ENCODE measurements at regions of chr1 and their contacts with region 1.

Region 1: DNA sequence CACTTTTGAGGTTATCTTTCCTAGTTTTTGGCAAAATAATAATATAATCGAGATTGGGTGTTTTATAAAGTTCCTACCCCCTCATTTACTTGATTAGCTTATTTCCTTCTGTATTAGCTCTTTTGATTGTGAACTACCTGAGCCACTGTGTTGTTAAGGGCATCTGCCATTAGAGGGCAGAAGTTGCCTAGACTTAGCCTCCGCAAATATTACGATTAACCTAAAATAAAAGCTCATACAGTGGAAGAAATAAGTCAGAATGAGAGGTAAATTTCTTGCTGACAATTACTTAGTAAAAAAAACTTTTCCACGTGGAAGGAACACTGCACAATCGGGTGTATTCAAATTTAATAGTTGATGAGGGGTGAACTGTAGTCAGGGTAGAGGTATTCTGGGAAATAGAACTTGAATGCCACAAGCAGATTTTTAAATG is 2.3 kb downstream of the H3-3A start:
- DNase-seq: peak; percentile 62
- H3K27ac ChIP-seq: no peak overlapping the region
- CTCF ChIP-seq: peak; percentile 76

Region 2: DNA sequence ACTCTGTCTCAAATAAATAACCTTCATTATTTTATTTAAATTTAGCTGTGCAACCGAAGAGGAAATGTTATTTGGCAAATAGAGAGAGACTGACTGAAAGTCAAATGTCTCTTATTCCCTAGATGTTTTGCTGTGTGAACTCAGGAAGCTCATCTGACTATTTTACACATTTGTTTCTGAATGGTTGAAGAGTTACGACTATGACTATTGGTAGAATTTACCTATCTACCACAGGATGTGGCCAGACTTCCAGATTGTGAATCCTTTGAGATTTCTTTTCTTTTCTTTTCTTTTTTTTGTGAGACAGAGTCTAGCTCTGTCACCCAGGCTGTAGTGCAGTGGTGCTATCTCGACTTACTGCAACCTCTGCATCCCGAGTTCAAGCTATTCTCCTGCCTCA is 60.4 kb before region 1 on chr1:
- CTCF ChIA-PET with region 1: interaction called, 18 read pairs
- POLR2A ChIA-PET with region 1: interaction called, 3 read pairs
- DNase-seq: no peak
- H3K27ac ChIP-seq: no peak overlapping the region
- CTCF ChIP-seq: no peak

Region 3: GRCh38 chr1:226083302-226084101 is 18.7 kb after region 1 on chr1:
- CTCF ChIA-PET with region 1: interaction called, 19 read pairs
- POLR2A ChIA-PET with region 1: interaction called, 4 read pairs
- DNase-seq: peak; percentile 98
- H3K27ac ChIP-seq: peak overlapping the region; percentile 84
- CTCF ChIP-seq: no peak

Region 4: DNA sequence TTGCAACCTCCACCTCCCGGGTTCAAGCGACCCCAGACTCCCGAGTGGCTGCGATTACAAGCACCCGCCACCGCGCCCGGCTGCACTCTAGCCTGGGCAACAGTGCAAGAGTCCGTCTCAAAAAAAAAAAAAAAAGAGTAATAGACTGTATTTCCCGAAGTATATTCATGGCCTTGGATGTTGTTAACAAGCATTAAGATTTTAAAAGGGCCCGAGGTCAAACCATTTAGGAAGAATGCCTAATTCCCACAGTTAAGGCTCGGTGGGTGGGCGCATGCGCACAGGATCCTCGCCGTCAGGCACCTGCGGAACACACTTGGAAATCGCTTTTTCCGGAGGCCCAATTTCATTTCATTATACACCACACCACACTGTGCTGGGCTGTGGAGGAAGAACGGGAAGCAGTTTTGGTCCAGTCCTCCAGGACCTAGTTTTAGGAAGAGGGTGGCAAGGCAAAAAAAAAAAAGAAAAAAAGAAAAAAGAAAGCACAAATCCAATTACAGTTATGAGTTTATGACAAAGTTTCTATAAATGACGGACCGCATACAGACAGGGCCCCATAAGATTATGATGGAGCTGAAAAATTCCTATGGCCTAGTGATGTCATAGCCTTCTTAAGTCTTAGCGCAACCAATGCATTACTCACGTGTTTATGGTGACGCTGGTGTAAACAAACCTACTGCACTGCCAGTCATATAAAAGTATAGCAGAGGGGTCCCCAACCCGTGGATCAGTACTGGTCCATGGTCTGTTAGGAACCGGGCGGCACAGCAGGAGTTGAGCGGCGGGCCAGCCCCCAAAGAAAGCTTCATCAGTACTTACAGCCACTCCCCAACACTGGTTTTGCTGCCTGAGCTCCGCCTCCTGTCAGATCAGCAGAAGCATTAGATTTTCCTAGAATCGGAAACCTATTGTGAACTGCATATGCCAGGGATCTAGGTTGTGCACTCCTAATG is 35.9 kb after region 1 on chr1:
- CTCF ChIA-PET with region 1: interaction called, 11 read pairs
- POLR2A ChIA-PET with region 1: no interaction called
- DNase-seq: no peak
- H3K27ac ChIP-seq: no peak overlapping the region
- CTCF ChIP-seq: no peak

Region 5: GRCh38 chr1:226109829-226110248 is 45.0 kb after region 1 on chr1:
- CTCF ChIA-PET with region 1: interaction called, 20 read pairs
- POLR2A ChIA-PET with region 1: interaction called, 3 read pairs
- DNase-seq: peak; percentile 97
- H3K27ac ChIP-seq: peak overlapping the region; percentile 97
- CTCF ChIP-seq: 0 out of 2 replicates have a peak, but pooled peaks have one; percentile 9

Region 6: GRCh38 chr1:226116673-226117072 is 51.8 kb after region 1 on chr1:
- CTCF ChIA-PET with region 1: interaction called, 39 read pairs
- POLR2A ChIA-PET with region 1: interaction called, 3 read pairs
- DNase-seq: no peak
- H3K27ac ChIP-seq: no peak overlapping the region
- CTCF ChIP-seq: no peak

Region 7: GRCh38 chr1:226149806-226150205 is 85.0 kb after region 1 on chr1:
- CTCF ChIA-PET with region 1: no interaction called
- POLR2A ChIA-PET with region 1: no interaction called
- DNase-seq: no peak
- H3K27ac ChIP-seq: no peak overlapping the region
- CTCF ChIP-seq: no peak